ENCODE measurements at regions of chr10 and their contacts with region 1.

Region 1: DNA sequence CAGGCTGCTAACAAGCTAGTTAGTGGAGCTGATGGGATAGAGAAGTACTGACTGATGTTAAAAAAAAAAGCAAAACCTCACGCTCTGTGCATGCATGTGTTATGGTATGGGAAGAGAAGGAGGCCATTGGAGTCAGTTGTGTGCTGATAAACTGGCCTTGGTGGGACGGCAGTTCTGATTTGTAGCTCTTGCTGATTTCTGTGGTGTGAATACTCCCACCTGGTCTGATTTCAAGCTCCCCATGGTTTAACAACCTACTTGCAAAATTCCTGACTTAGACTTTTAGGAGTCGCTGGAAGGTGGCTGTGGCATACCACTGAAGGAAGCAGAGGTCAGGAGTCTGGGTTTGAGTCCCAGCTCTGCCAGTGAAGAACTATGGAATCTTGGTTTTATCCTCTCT is 15.2 kb downstream of the CAMK1D start:
- DNase-seq: no peak
- ATAC-seq: no peak
- H3K4me3 ChIP-seq: no peak overlapping the region
- H3K27ac ChIP-seq: no peak overlapping the region
- H3K4me1 ChIP-seq: peaks cover 19% of the 10 kb centered on the region
- H3K27me3 ChIP-seq: no peaks in the 10 kb centered on the region
- CTCF ChIP-seq: no peak
- EP300 ChIP-seq: no peak
- POLR2A ChIP-seq: no peak
- RAD21 ChIP-seq: no peak

Region 2: GRCh38 chr10:11045995-11046775 is 1318.4 kb before region 1 on chr10:
- CTCF ChIA-PET with region 1: no interaction called
- POLR2A ChIA-PET with region 1: no interaction called
- RAD21 ChIA-PET with region 1: no interaction called
- SMC1A ChIA-PET with region 1: no interaction called
- in situ Hi-C with region 1: no loop called
- intact Hi-C with region 1: no loop called
- DNase-seq: no peak
- ATAC-seq: no peak
- H3K4me3 ChIP-seq: no peak overlapping the region
- H3K27ac ChIP-seq: no peak overlapping the region
- H3K4me1 ChIP-seq: no peaks in the 10 kb centered on the region
- H3K27me3 ChIP-seq: no peaks in the 10 kb centered on the region; a peak in 1 of 4 replicates
- CTCF ChIP-seq: no peak
- EP300 ChIP-seq: no peak
- POLR2A ChIP-seq: no peak
- RAD21 ChIP-seq: no peak

Region 3: DNA sequence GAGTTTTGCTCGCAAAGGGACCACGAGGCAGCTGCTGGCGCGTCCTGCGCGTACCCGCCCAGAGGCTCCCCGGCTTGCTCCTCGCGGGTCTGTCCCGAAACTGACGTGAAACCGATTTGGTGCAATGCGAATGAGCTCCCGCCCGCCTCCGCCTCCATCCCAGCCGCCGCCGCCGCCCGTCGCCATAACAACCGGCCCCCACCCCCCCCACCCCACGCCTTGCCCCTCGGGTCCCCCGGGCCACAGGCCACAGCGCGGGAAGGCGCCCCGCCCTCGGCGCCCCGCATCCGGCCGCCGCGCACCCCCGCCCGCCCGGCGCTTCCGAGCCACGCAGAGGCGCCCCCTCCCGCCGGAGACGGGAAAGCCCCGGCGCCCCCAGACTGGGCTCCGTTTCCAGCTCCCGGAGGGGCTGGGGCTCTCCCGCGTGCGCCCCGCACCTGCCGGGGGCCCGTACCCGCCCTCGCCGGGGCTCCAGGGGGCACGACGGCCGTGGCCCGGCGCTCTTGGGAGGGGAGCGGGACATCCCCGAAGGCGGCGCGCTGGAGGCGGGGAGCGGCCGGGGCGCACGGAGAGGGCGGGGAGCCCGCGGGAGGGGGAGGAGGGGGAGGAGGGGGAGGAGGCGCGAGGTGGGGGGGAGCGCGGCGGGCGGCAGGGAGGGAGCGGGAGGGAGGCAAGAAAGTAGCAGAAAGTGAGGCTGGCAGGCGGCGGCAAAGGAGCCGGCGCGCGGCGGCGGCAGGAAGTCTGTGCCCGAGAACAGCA is 15.5 kb before region 1 on chr10 and contains the start of gene CAMK1D:
- CTCF ChIA-PET with region 1: interaction called, 7 read pairs
- POLR2A ChIA-PET with region 1: interaction called, 8 read pairs
- RAD21 ChIA-PET with region 1: interaction called, 17 read pairs
- SMC1A ChIA-PET with region 1: interaction called, 30 read pairs
- in situ Hi-C with region 1: no loop called
- intact Hi-C with region 1: loop called (anchors 2 kb)
- DNase-seq: no peak
- ATAC-seq: peak; percentile 57
- H3K4me3 ChIP-seq: peak within 1 kb of the TSS; percentile 92
- H3K27ac ChIP-seq: peak within 1 kb of the TSS; percentile 67
- H3K4me1 ChIP-seq: peaks cover 27% of the 10 kb centered on the region
- H3K27me3 ChIP-seq: no peaks in the 10 kb centered on the region
- CTCF ChIP-seq: peak; percentile 9 to 19 (median 15); a peak in 1 of 6 replicates
- EP300 ChIP-seq: no peak
- POLR2A ChIP-seq: peak; percentile 85
- RAD21 ChIP-seq: peak; percentile 11; the same call in 1 of the 2 replicates
- polyA plus RNA-seq, gene CAMK1D: 2.1 to 5.5 TPM

Region 4: DNA sequence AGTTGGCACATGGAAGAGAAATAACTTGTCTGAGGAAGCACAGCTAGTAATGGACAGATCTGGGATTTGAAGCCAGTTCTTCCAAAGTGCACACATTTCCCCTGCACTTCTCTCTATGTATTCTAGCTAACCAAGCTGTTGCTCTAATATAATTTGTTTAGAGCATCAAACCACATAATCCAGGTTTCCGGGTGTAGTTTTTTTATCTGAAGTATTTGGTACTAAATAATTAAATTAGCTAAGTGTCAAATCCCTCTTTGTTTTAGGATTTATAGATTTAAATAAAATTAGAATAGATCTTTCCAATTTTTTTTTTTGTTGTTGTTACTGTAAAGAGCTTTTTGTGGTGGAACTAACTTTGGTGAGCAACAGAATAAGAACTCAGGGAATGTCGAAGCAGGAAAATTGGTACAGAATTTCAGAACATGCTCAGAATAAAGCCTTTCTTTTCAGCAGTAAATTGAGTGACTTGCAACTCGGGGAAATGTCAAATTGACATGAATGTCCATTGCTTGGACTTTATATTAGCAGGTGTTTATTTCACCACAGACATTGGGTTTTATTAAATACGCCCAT is 18.5 kb after region 1 on chr10:
- CTCF ChIA-PET with region 1: interaction called, 3 read pairs
- POLR2A ChIA-PET with region 1: no interaction called
- RAD21 ChIA-PET with region 1: no interaction called
- SMC1A ChIA-PET with region 1: interaction called, 10 read pairs
- in situ Hi-C with region 1: no loop called
- intact Hi-C with region 1: no loop called
- DNase-seq: no peak
- ATAC-seq: no peak
- H3K4me3 ChIP-seq: no peak overlapping the region
- H3K27ac ChIP-seq: no peak overlapping the region
- H3K4me1 ChIP-seq: no peaks in the 10 kb centered on the region
- H3K27me3 ChIP-seq: no peaks in the 10 kb centered on the region
- CTCF ChIP-seq: no peak
- EP300 ChIP-seq: no peak
- POLR2A ChIP-seq: no peak
- RAD21 ChIP-seq: no peak

Region 5: GRCh38 chr10:12484941-12485805 is 120.6 kb after region 1 on chr10:
- CTCF ChIA-PET with region 1: interaction called, 4 read pairs
- POLR2A ChIA-PET with region 1: interaction called, 5 read pairs
- RAD21 ChIA-PET with region 1: interaction called, 4 read pairs
- SMC1A ChIA-PET with region 1: interaction called, 12 read pairs
- in situ Hi-C with region 1: no loop called
- intact Hi-C with region 1: loop called (anchors 10 kb)
- DNase-seq: peak; percentile 76
- ATAC-seq: peak; percentile 85
- H3K4me3 ChIP-seq: no peak overlapping the region
- H3K27ac ChIP-seq: peak overlapping the region; percentile 76
- H3K4me1 ChIP-seq: peaks cover 20% of the 10 kb centered on the region
- H3K27me3 ChIP-seq: no peaks in the 10 kb centered on the region
- CTCF ChIP-seq: peak in 2 of 3 experiments; percentile 37 to 56; a peak in 3 of 6 replicates
- EP300 ChIP-seq: no peak
- POLR2A ChIP-seq: peak; percentile 37
- RAD21 ChIP-seq: peak; percentile 31; the same call in 1 of the 2 replicates

Measured in GM12878 (cell line).